Endothelial cell of umbilical vein (primary cell): ENCODE measurements at regions of chr20 and their contacts with region 1.

Region 1: DNA sequence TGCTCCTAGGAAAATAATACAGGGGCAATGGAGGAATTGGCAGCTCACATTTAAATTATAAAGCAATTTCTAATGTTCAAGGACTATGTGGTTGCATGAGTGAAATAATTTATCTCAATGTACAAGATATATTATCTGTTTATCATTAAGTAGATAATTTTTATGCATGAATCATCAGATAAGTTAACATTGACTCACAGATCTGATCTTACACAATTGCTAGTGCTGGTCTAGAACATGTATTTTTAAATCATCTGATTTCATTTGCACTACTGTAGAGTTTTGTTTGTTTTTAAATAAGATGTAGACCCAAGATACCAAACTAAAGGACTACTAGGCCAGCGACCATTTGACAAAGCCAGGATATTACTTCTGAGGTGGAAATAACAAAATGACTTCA is 199.2 kb downstream of the BMP2 start:
- DNase-seq: no peak
- H3K4me3 ChIP-seq: no peak overlapping the region
- H3K27ac ChIP-seq: no peak overlapping the region
- H3K4me1 ChIP-seq: peaks cover 7% of the 10 kb centered on the region
- H3K27me3 ChIP-seq: no peaks in the 10 kb centered on the region
- CTCF ChIP-seq: no peak
- POLR2A ChIP-seq: no peak

Region 2: GRCh38 chr20:6993016-6993415 is 26.3 kb after region 1 on chr20:
- CTCF ChIA-PET with region 1: no interaction called
- POLR2A ChIA-PET with region 1: no interaction called
- dilution Hi-C with region 1: no loop called
- intact Hi-C with region 1: loop called (anchors 1 kb)
- DNase-seq: no peak
- H3K4me3 ChIP-seq: no peak overlapping the region
- H3K27ac ChIP-seq: no peak overlapping the region
- H3K4me1 ChIP-seq: no peaks in the 10 kb centered on the region
- H3K27me3 ChIP-seq: no peaks in the 10 kb centered on the region
- CTCF ChIP-seq: no peak
- POLR2A ChIP-seq: no peak

Region 3: DNA sequence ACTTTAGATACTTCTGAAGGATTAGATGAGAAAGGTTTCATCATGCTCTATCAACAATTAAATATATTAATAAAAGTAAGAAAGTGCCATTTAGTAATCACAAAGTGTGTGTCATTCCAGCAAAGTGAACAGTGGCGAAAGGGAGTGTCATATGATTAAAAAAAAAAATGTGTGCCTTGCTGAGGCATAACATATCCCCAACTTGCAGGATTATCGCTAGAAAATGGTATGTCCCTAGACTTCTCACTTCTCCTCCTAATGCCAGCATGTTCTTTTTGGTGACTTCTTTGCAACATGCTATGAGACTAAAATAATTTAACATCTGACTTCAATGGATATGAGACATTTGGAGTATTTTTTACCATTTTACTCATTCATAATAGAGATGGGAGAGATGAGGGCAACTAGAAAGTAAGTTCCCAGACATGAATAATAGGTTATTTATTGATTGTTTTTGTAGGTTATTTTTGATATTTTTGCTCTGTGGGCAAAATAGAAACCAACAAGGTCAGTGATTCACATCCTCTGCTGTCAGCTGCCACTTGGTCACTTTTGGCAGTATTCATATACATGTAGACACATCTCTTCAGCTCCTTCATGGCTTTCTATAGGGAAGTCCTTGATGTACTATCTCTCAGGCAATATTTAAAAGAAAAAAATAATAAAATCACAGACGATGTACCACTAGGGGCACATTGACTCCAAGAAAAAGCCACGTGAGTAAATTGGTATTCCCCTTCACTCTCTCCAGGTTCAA is 170.9 kb after region 1 on chr20:
- CTCF ChIA-PET with region 1: no interaction called
- POLR2A ChIA-PET with region 1: no interaction called
- dilution Hi-C with region 1: no loop called
- intact Hi-C with region 1: no loop called
- DNase-seq: peak; percentile 11
- H3K4me3 ChIP-seq: no peak overlapping the region
- H3K27ac ChIP-seq: no peak overlapping the region
- H3K4me1 ChIP-seq: no peaks in the 10 kb centered on the region
- H3K27me3 ChIP-seq: no peaks in the 10 kb centered on the region
- CTCF ChIP-seq: no peak
- POLR2A ChIP-seq: no peak

Region 4: GRCh38 chr20:8156235-8157079 is 1189.7 kb after region 1 on chr20:
- CTCF ChIA-PET with region 1: no interaction called
- POLR2A ChIA-PET with region 1: no interaction called
- dilution Hi-C with region 1: no loop called
- intact Hi-C with region 1: no loop called
- DNase-seq: peak; percentile 64
- H3K4me3 ChIP-seq: no peak overlapping the region
- H3K27ac ChIP-seq: peak overlapping the region; percentile 84
- H3K4me1 ChIP-seq: peaks cover 64% of the 10 kb centered on the region
- H3K27me3 ChIP-seq: no peaks in the 10 kb centered on the region
- CTCF ChIP-seq: no peak
- POLR2A ChIP-seq: no peak